Right ventricle myocardium inferior (tissue), 1 donor: ENCODE measurements at regions of chr18 and their contacts with region 1.

Region 1: GRCh38 chr18:71729611-71730010 is 814.5 kb downstream of the CBLN2 start:
- DNase-seq: no peak
- ATAC-seq: no peak

Region 2: GRCh38 chr18:71503222-71503621 is 226.4 kb before region 1 on chr18:
- intact Hi-C with region 1: loop called (anchors 5 kb)
- DNase-seq: no peak
- ATAC-seq: no peak